PC-9 (cell line): ENCODE measurements at regions of chr17 and their contacts with region 1.

Region 1: GRCh38 chr17:38667099-38667786 is 7.5 kb downstream of the EPOP start:
- DNase-seq: peak; percentile 58 to 66
- H3K4me3 ChIP-seq: no peak overlapping the region
- H3K27ac ChIP-seq: no peak overlapping the region
- H3K4me1 ChIP-seq: peaks cover 7% of the 10 kb centered on the region
- H3K27me3 ChIP-seq: no peaks in the 10 kb centered on the region
- CTCF ChIP-seq: peak; percentile 99

Region 2: DNA sequence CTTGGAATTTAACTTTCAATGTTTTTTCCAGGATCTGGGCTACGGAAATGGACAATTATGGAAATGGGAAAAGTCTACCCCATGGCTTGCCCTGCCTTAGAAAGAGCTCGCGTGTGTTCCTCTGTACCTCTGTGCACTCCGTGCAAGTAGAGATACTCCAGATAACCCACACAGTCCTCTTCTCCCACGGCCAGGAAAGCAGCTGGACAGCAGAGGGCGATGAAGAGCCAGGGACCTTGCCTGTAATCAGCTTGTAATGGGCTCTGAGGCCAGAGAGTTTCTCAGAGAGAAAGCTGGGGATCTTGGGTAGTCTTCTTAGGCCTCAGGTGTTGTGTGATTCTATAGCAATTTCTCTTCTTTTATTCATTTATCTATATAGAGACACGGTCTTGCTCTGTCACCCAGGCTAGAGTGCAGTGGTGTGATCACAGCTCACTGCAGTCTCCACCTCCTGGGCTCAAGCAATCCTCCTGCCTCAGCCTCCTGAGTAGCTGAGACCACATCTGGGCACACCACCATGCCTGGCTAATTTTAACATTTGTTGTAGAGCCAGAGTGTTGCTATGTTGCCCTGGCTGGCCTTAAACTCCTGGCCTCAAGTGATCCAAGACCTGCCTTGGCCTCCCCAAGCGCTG is 318.0 kb before region 1 on chr17:
- CTCF ChIA-PET with region 1: interaction called, 3 read pairs
- POLR2A ChIA-PET with region 1: interaction called, 3 read pairs
- intact Hi-C with region 1: loop called (anchors 2 kb)
- DNase-seq: peak; percentile 61 to 78
- H3K4me3 ChIP-seq: no peak overlapping the region
- H3K27ac ChIP-seq: no peak overlapping the region
- H3K4me1 ChIP-seq: peaks cover 23% of the 10 kb centered on the region
- H3K27me3 ChIP-seq: no peaks in the 10 kb centered on the region
- CTCF ChIP-seq: peak; percentile 88

Region 3: GRCh38 chr17:38444151-38444550 is 223.1 kb before region 1 on chr17:
- CTCF ChIA-PET with region 1: interaction called, 6 read pairs
- POLR2A ChIA-PET with region 1: no interaction called
- intact Hi-C with region 1: loop called (anchors 5 kb)
- DNase-seq: peak in 1 of 2 experiments; percentile 72
- H3K4me3 ChIP-seq: no peak overlapping the region
- H3K27ac ChIP-seq: no peak overlapping the region
- H3K4me1 ChIP-seq: peaks cover 48% of the 10 kb centered on the region
- H3K27me3 ChIP-seq: no peaks in the 10 kb centered on the region
- CTCF ChIP-seq: peak; percentile 91

Region 4: DNA sequence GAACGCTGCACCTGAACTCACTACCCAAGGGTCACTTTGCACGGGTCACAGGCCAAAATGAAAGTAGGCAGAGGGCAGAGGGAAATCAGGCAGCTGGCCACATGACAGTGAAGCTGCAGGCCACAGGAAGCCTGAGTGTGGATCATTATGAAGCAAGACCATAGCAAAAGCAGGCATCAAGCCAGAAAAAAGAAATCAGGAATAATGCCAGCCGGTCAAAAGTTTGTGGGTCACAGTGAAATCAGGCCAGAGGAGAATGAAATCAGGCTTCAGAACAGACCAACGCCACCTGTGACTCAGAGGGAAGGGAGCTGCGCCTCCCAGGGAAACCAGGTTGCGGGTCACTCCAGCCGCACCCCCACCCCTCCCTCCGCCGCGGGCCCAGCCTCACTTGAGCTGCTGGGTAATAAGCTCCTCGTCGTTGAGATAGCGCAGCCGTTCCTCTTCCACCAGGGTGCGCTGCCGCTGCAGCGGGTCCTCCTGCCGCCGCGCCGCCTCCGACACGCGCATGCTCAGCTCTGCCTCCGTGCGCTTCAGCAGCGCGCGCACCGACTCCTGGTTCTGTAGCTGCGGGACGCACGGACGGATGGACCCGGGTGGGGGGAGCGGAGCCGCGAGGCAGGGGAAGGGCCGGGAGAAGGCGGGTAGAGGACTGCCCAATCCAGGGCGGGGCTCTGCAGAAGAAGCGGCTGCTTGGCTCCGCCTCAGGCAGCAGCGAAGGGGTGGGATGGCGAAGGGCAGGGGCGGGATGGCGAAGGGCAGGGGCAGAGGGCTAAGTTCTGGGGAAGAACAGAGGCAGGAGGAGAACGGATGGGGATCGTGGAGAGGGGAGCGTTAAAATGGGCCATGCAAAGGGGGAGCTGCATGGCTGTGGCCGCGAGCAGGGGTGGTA is 109.2 kb before region 1 on chr17:
- CTCF ChIA-PET with region 1: interaction called, 19 read pairs
- POLR2A ChIA-PET with region 1: interaction called, 3 read pairs
- intact Hi-C with region 1: loop called (anchors 1 kb)
- DNase-seq: peak; percentile 95 to 96
- H3K4me3 ChIP-seq: peak overlapping the region; percentile 57; the same call in 1 of the 2 replicates
- H3K27ac ChIP-seq: peak overlapping the region; percentile 91
- H3K4me1 ChIP-seq: peaks cover 54% of the 10 kb centered on the region
- H3K27me3 ChIP-seq: no peaks in the 10 kb centered on the region
- CTCF ChIP-seq: peak; percentile 78

Region 5: GRCh38 chr17:38702166-38702899 is 35.1 kb after region 1 on chr17:
- CTCF ChIA-PET with region 1: no interaction called
- POLR2A ChIA-PET with region 1: no interaction called
- intact Hi-C with region 1: no loop called
- DNase-seq: peak; percentile 78 to 82
- H3K4me3 ChIP-seq: peak overlapping the region; percentile 99
- H3K27ac ChIP-seq: peak overlapping the region; percentile 82
- H3K4me1 ChIP-seq: peaks cover 23% of the 10 kb centered on the region
- H3K27me3 ChIP-seq: no peaks in the 10 kb centered on the region
- CTCF ChIP-seq: no peak

Region 6: GRCh38 chr17:39209317-39210092 is 542.3 kb after region 1 on chr17:
- CTCF ChIA-PET with region 1: interaction called, 13 read pairs
- POLR2A ChIA-PET with region 1: no interaction called
- intact Hi-C with region 1: no loop called
- DNase-seq: no peak
- H3K4me3 ChIP-seq: no peak overlapping the region
- H3K27ac ChIP-seq: no peak overlapping the region
- H3K4me1 ChIP-seq: no peaks in the 10 kb centered on the region
- H3K27me3 ChIP-seq: no peaks in the 10 kb centered on the region
- CTCF ChIP-seq: no peak